HEK293T (cell line): ENCODE measurements at regions of chr19 and their contacts with region 1.

Region 1: GRCh38 chr19:35509861-35510625 is 3.4 kb downstream of the DMKN start:
- DNase-seq: peak; percentile 92

Region 2: GRCh38 chr19:35462476-35462953 is 47.5 kb before region 1 on chr19:
- CTCF ChIA-PET with region 1: no interaction called
- POLR2A ChIA-PET with region 1: no interaction called
- DNase-seq: no peak

Region 3: GRCh38 chr19:35487643-35488182 is 22.3 kb before region 1 on chr19:
- CTCF ChIA-PET with region 1: interaction called, 3 read pairs
- POLR2A ChIA-PET with region 1: interaction called, 10 read pairs
- DNase-seq: no peak

Region 4: GRCh38 chr19:35497406-35497805 is 12.6 kb before region 1 on chr19:
- CTCF ChIA-PET with region 1: interaction called, 7 read pairs
- POLR2A ChIA-PET with region 1: interaction called, 19 read pairs
- DNase-seq: no peak

Region 5: DNA sequence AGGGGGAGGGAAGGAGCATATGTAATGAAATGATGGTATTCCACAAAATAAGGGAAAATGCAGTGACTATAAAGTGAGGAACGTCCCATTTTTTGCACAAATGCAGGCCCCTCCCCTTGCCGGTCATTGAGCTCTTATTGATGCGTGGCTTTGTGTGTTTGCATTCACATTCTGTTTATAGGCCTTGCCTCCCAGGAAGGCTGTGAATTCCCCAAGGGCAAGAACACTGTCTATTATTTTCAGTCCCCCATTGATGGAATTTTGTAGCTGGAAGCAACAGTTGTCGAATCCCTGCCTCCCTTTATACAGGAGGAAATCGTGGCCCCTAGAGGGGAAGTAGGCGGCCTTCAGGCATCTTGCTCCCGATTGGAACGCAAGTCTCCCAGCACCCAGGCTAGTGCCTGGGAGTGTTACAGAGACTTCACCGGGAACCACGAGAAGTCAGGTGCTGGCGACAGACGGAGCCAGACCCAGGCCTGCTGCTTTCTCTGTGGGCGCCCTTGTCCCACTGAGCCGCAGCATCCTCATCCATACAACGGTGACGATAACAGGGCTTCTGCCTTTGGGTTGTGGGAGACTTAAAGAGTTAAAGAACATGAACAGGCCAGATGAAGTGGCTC is 11.2 kb after region 1 on chr19:
- CTCF ChIA-PET with region 1: interaction called, 7 read pairs
- POLR2A ChIA-PET with region 1: interaction called, 10 read pairs
- DNase-seq: no peak

Region 6: DNA sequence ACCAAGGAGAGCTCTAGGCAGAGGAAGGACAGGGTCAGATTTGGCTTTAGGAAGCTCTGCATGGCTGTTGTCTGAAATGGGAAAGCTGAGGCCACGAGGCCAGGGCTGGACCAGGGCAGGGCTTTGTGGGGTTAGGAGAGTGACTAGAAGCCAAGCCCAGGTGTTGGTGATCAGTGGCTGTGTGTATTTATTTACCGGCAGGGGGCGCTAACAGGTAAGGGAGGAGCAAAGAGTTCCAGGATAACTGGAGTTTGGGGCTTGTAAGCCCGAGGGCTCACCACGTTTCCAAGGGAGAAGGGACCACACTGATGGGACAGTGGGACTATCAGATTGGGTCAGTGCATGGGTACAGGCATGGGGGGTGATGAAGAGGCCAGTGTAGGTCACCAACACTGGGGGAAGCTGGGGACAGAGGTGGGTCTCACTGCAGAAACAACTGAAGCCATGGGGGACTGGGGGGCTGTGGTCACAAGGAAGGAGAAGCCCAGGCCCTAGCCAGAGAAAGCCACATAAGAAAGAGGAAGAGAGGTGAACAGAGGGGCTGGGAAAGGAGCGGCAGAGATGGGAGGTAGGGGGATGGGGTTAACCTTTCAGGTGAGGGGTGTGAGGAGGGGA is 39.2 kb after region 1 on chr19:
- CTCF ChIA-PET with region 1: interaction called, 3 read pairs
- POLR2A ChIA-PET with region 1: interaction called, 13 read pairs
- DNase-seq: peak; percentile 77